ENCODE measurements at regions of chr17 and their contacts with region 1.

Region 1: DNA sequence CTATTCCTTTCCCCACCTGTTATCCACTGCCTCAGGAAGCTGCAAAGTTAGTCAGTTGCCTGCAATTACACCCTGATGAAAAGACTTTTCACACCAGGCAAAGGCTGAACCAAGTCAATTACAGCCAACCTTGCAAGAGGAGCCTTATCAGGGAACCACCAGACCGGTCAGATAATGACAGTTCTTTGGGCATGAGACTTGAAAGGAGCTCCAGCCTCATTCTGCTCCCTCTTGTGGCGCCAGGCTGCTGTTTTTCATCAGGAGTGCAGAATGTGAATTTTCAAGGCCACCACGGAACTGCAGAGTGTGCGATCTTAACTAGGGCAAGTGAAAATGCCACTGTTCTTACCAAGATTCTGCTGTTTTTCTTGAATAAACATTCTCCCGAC is 22.5 kb downstream of the DNAI2 start:
- DNase-seq: peak; percentile 29
- H3K4me3 ChIP-seq: no peak overlapping the region
- H3K27ac ChIP-seq: no peak overlapping the region
- H3K4me1 ChIP-seq: peaks cover 7% of the 10 kb centered on the region
- H3K27me3 ChIP-seq: no peaks in the 10 kb centered on the region
- CTCF ChIP-seq: peak; percentile 17 to 56

Region 2: GRCh38 chr17:74212913-74213791 is 83.4 kb before region 1 on chr17 and contains the start of gene TTYH2:
- CTCF ChIA-PET with region 1: interaction called, 6 read pairs
- dilution Hi-C with region 1: no loop called
- in situ Hi-C with region 1: no loop called
- intact Hi-C with region 1: loop called (anchors 5 kb)
- DNase-seq: peak; percentile 73
- H3K4me3 ChIP-seq: peak within 1 kb of the TSS; percentile 55 to 66 (median 64)
- H3K27ac ChIP-seq: peak within 1 kb of the TSS; percentile 42
- H3K4me1 ChIP-seq: peaks cover 43% of the 10 kb centered on the region
- H3K27me3 ChIP-seq: no peaks in the 10 kb centered on the region
- CTCF ChIP-seq: peak; percentile 9 to 56
- total RNA-seq, gene TTYH2: 0.49 to 0.67 TPM

Region 3: GRCh38 chr17:74361230-74362068 is 64.9 kb after region 1 on chr17 and contains the start of gene BTBD17:
- CTCF ChIA-PET with region 1: no interaction called
- dilution Hi-C with region 1: no loop called
- in situ Hi-C with region 1: no loop called
- intact Hi-C with region 1: loop called (anchors 1 kb)
- DNase-seq: peak; percentile 20
- H3K4me3 ChIP-seq: no peak within 1 kb of the TSS
- H3K27ac ChIP-seq: no peak within 1 kb of the TSS
- H3K4me1 ChIP-seq: no peaks in the 10 kb centered on the region
- H3K27me3 ChIP-seq: peaks cover 9% of the 10 kb centered on the region
- CTCF ChIP-seq: peak; percentile 45 to 72
- total RNA-seq, gene BTBD17: not detected

Region 4: GRCh38 chr17:74394977-74395376 is 98.4 kb after region 1 on chr17:
- CTCF ChIA-PET with region 1: no interaction called
- dilution Hi-C with region 1: no loop called
- in situ Hi-C with region 1: no loop called
- intact Hi-C with region 1: no loop called
- DNase-seq: no peak
- H3K4me3 ChIP-seq: no peak overlapping the region
- H3K27ac ChIP-seq: no peak overlapping the region
- H3K4me1 ChIP-seq: no peaks in the 10 kb centered on the region
- H3K27me3 ChIP-seq: no peaks in the 10 kb centered on the region
- CTCF ChIP-seq: no peak